ENCODE measurements at regions of chr11 and their contacts with region 1.

Region 1: DNA sequence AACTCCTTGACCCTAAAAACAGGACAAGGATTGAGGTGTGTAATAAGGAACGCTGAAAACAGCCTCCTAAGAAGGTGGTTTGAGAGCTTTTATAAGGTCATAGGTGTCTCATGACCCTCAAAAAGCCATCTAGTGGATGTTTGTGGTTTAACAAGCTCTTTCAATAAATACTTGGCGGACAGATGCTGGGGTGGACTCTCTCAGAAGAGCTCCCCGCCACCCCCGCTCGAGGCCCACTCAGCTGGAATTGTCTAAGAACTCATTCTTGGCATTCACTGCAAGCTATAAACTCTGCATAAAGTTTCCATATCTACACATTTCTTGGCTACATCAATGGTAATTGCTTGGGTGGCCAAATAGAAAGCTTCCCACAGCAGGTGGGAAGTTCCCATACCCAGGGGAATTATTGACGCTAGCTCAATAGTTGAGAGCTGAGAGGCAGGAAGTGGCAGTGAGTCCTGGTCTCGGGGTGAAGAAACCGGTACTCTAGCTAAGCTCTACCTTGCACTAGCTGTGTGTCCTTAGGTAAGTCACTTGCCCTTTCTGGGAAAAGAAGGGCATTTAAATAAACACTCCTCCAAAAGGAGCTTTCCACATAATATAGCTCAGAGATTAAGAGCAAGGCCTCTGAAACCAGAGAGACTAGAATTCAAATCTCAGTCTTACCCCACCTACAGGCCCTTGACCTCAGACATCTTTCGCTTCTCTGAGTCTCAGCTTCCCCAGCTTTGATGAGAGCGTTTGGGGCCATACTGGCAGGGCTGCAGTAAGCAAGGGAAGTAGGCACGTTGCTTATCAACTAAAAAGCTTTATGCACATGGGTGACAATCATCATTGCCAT is 6.4 kb downstream of the MS4A15 start:
- DNase-seq: no peak
- H3K4me3 ChIP-seq: no peak overlapping the region
- H3K27ac ChIP-seq: no peak overlapping the region
- H3K4me1 ChIP-seq: peaks cover 0 to 1% (median 0%) of the 10 kb centered on the region in 4 experiments; a peak in 1 of 7 replicates
- H3K27me3 ChIP-seq: peaks cover 0 to 6% (median 3%) of the 10 kb centered on the region in 4 experiments; a peak in 3 of 7 replicates
- CTCF ChIP-seq: peak in 2 of 3 experiments; percentile 47 to 58; a peak in 2 of 4 replicates
- EP300 ChIP-seq: no peak
- POLR2A ChIP-seq: no peak
- RAD21 ChIP-seq: peak; percentile 40 to 48

Region 2: GRCh38 chr11:60700689-60701480 is 62.2 kb before region 1 on chr11:
- CTCF ChIA-PET with region 1: interaction called, 90 read pairs
- POLR2A ChIA-PET with region 1: no interaction called
- DNase-seq: peak in 1 of 2 experiments; percentile 67
- H3K4me3 ChIP-seq: no peak overlapping the region
- H3K27ac ChIP-seq: no peak overlapping the region
- H3K4me1 ChIP-seq: peaks cover 0 to 2% (median 0%) of the 10 kb centered on the region in 4 experiments; a peak in 3 of 7 replicates
- H3K27me3 ChIP-seq: no peaks in the 10 kb centered on the region
- CTCF ChIP-seq: peak; percentile 35 to 80 (median 70)
- EP300 ChIP-seq: no peak
- POLR2A ChIP-seq: no peak
- RAD21 ChIP-seq: peak; percentile 76 to 77

Region 3: GRCh38 chr11:60710482-60710881 is 52.6 kb before region 1 on chr11:
- CTCF ChIA-PET with region 1: interaction called, 18 read pairs
- POLR2A ChIA-PET with region 1: no interaction called
- DNase-seq: peak in 1 of 2 experiments; percentile 45
- H3K4me3 ChIP-seq: no peak overlapping the region
- H3K27ac ChIP-seq: no peak overlapping the region
- H3K4me1 ChIP-seq: no peaks in the 10 kb centered on the region
- H3K27me3 ChIP-seq: no peaks in the 10 kb centered on the region
- CTCF ChIP-seq: peak; percentile 7 to 69 (median 52)
- EP300 ChIP-seq: no peak
- POLR2A ChIP-seq: no peak
- RAD21 ChIP-seq: peak; percentile 30 to 39; a peak in 2 of 4 replicates

Region 4: GRCh38 chr11:60750926-60751325 is 12.1 kb before region 1 on chr11:
- CTCF ChIA-PET with region 1: interaction called, 35 read pairs
- POLR2A ChIA-PET with region 1: no interaction called
- DNase-seq: no peak
- H3K4me3 ChIP-seq: no peak overlapping the region
- H3K27ac ChIP-seq: no peak overlapping the region
- H3K4me1 ChIP-seq: no peaks in the 10 kb centered on the region
- H3K27me3 ChIP-seq: no peaks in the 10 kb centered on the region
- CTCF ChIP-seq: no peak
- EP300 ChIP-seq: no peak
- POLR2A ChIP-seq: no peak
- RAD21 ChIP-seq: no peak

Region 5: DNA sequence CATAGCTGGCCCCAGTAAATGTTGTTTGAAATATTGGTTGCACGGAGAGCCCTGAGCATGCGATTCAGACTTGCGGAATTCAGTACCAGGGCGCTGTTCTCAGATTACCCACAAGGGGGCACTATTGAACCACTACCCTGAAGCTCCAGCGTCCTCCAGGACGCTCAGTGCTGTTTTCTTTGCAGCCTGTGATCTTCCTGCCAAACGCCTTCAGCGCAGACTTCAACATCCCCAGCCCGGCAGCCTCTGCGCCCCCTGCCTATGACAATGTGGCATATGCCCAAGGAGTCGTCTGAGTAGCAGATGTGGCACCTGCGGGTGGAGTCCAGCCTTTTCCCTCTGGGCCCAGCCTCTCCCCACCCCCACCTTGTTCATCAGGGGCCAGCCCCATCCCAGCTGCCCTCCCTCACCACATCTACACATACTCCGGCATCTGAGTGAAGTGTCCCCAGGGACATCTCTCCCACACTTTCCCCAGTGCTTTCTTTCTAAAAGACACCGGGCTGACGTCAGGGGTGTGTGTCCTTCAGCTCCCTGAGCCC is 12.4 kb after region 1 on chr11:
- CTCF ChIA-PET with region 1: interaction called, 145 read pairs
- POLR2A ChIA-PET with region 1: no interaction called
- DNase-seq: peak; percentile 90 to 94
- H3K4me3 ChIP-seq: no peak overlapping the region
- H3K27ac ChIP-seq: no peak overlapping the region
- H3K4me1 ChIP-seq: no peaks in the 10 kb centered on the region; a peak in 1 of 7 replicates
- H3K27me3 ChIP-seq: no peaks in the 10 kb centered on the region
- CTCF ChIP-seq: peak; percentile 65 to 96 (median 93)
- EP300 ChIP-seq: no peak
- POLR2A ChIP-seq: no peak
- RAD21 ChIP-seq: peak; percentile 81 to 86

Region 6: GRCh38 chr11:60821827-60822599 is 58.9 kb after region 1 on chr11:
- CTCF ChIA-PET with region 1: interaction called, 13 read pairs
- POLR2A ChIA-PET with region 1: no interaction called
- DNase-seq: no peak
- H3K4me3 ChIP-seq: no peak overlapping the region
- H3K27ac ChIP-seq: no peak overlapping the region
- H3K4me1 ChIP-seq: no peaks in the 10 kb centered on the region; a peak in 1 of 7 replicates
- H3K27me3 ChIP-seq: no peaks in the 10 kb centered on the region; a peak in 1 of 7 replicates
- CTCF ChIP-seq: no peak
- EP300 ChIP-seq: no peak
- POLR2A ChIP-seq: no peak
- RAD21 ChIP-seq: no peak